CD14-positive monocyte (primary cell): ENCODE measurements at regions of chr1 and their contacts with region 1.

Region 1: GRCh38 chr1:24822887-24823286 is 77.6 kb downstream of the CLIC4 start:
- DNase-seq: peak in 1 of 3 donors; percentile 29
- H3K4me3 ChIP-seq: no peak overlapping the region
- H3K4me3 Mint-ChIP-seq: peak overlapping the region in 1 of 2 donors; percentile 16
- H3K27ac ChIP-seq: peak overlapping the region in 1 of 2 donors; percentile 45
- H3K27ac Mint-ChIP-seq: peak overlapping the region in 6 of 7 donors; percentile 19 to 80 (median 58)
- H3K4me1 ChIP-seq: peaks cover 0 to 14% of the 10 kb centered on the region in 2 donors
- H3K4me1 Mint-ChIP-seq: peaks cover 18% of the 10 kb centered on the region
- H3K27me3 ChIP-seq: no peaks in the 10 kb centered on the region
- H3K27me3 Mint-ChIP-seq: peaks cover 0 to 3% (median 2%) of the 10 kb centered on the region in 3 donors
- CTCF ChIP-seq: no peak

Region 2: GRCh38 chr1:24754229-24754628 is 68.7 kb before region 1 on chr1:
- intact Hi-C with region 1: loop called in 1 of 2 experiments (anchors 10 kb)
- DNase-seq: no peak
- H3K4me3 ChIP-seq: no peak overlapping the region
- H3K4me3 Mint-ChIP-seq: no peak overlapping the region
- H3K27ac ChIP-seq: no peak overlapping the region
- H3K27ac Mint-ChIP-seq: no peak overlapping the region
- H3K4me1 ChIP-seq: peaks cover 3 to 6% of the 10 kb centered on the region in 2 donors
- H3K4me1 Mint-ChIP-seq: peaks cover 2% of the 10 kb centered on the region
- H3K27me3 ChIP-seq: no peaks in the 10 kb centered on the region
- H3K27me3 Mint-ChIP-seq: peaks cover 0 to 2% (median 0%) of the 10 kb centered on the region in 3 donors
- CTCF ChIP-seq: no peak